ENCODE measurements at regions of chr7 and their contacts with region 1.

Region 1: DNA sequence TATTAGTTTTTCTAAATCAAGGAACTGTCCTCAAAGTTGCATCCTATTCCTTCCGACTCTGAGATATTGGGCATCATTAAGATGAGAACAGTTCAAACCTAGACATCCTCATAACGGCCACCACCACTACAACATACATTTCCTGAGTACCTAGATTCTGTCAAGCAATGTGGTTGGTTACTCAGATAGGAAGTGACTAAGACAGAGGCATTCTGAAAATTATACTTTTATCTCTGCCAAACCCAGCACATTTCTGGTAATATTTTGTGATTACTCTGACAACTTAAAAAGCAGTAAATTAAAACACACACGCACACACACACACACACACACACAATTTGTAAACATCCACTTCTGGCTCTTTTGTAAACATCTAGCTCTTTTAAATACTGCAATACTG is 291.2 kb upstream of the MEOX2 start:
- DNase-seq: peak; percentile 63
- ATAC-seq: peak; percentile 78
- H3K4me3 ChIP-seq: no peak overlapping the region
- H3K27ac ChIP-seq: no peak overlapping the region
- H3K4me1 ChIP-seq: no peaks in the 10 kb centered on the region; the same call in 1 of the 2 replicates
- H3K27me3 ChIP-seq: no peaks in the 10 kb centered on the region
- CTCF ChIP-seq: no peak
- POLR2A ChIP-seq: no peak
- RAD21 ChIP-seq: no peak

Region 2: GRCh38 chr7:15915686-15916293 is 61.9 kb before region 1 on chr7:
- CTCF ChIA-PET with region 1: no interaction called
- POLR2A ChIA-PET with region 1: no interaction called
- dilution Hi-C with region 1: no loop called
- in situ Hi-C with region 1: no loop called
- intact Hi-C with region 1: no loop called
- DNase-seq: peak; percentile 80
- ATAC-seq: peak; percentile 83
- H3K4me3 ChIP-seq: no peak overlapping the region
- H3K27ac ChIP-seq: peak overlapping the region; percentile 38; the same call in 1 of the 2 replicates
- H3K4me1 ChIP-seq: peaks cover 7% of the 10 kb centered on the region
- H3K27me3 ChIP-seq: no peaks in the 10 kb centered on the region
- CTCF ChIP-seq: no peak
- POLR2A ChIP-seq: no peak
- RAD21 ChIP-seq: no peak

Region 3: GRCh38 chr7:16021851-16022250 is 44.2 kb after region 1 on chr7:
- CTCF ChIA-PET with region 1: no interaction called
- POLR2A ChIA-PET with region 1: no interaction called
- dilution Hi-C with region 1: no loop called
- in situ Hi-C with region 1: no loop called
- intact Hi-C with region 1: loop called (anchors 5 kb)
- DNase-seq: no peak
- ATAC-seq: no peak
- H3K4me3 ChIP-seq: no peak overlapping the region
- H3K27ac ChIP-seq: no peak overlapping the region
- H3K4me1 ChIP-seq: peaks cover 8% of the 10 kb centered on the region
- H3K27me3 ChIP-seq: no peaks in the 10 kb centered on the region
- CTCF ChIP-seq: no peak
- POLR2A ChIP-seq: no peak
- RAD21 ChIP-seq: no peak

Measured in IMR-90 (cell line).